ENCODE measurements at regions of chr17 and their contacts with region 1.

Region 1: GRCh38 chr17:69567130-69567529 is 152.6 kb downstream of the MAP2K6 start:
- DNase-seq: no peak
- H3K4me3 ChIP-seq: no peak overlapping the region
- H3K4me3 Mint-ChIP-seq: no peak overlapping the region
- H3K27ac ChIP-seq: no peak overlapping the region
- H3K27ac Mint-ChIP-seq: no peak overlapping the region
- H3K4me1 ChIP-seq: no peaks in the 10 kb centered on the region
- H3K4me1 Mint-ChIP-seq: peaks cover 0 to 6% (median 4%) of the 10 kb centered on the region in 4 donors
- H3K27me3 ChIP-seq: no peaks in the 10 kb centered on the region
- H3K27me3 Mint-ChIP-seq: peaks cover 2 to 17% of the 10 kb centered on the region in 2 donors

Region 2: GRCh38 chr17:69506489-69506888 is 60.6 kb before region 1 on chr17:
- CTCF ChIA-PET with region 1: no interaction called
- POLR2A ChIA-PET with region 1: no interaction called
- intact Hi-C with region 1: no loop called
- DNase-seq: no peak
- H3K4me3 ChIP-seq: no peak overlapping the region
- H3K4me3 Mint-ChIP-seq: no peak overlapping the region
- H3K27ac ChIP-seq: no peak overlapping the region
- H3K27ac Mint-ChIP-seq: peak overlapping the region in 2 of 7 donors; percentile 75 to 82
- H3K4me1 ChIP-seq: no peaks in the 10 kb centered on the region
- H3K4me1 Mint-ChIP-seq: peaks cover 6 to 21% (median 11%) of the 10 kb centered on the region in 4 donors
- H3K27me3 ChIP-seq: no peaks in the 10 kb centered on the region
- H3K27me3 Mint-ChIP-seq: no peaks in the 10 kb centered on the region

Region 3: DNA sequence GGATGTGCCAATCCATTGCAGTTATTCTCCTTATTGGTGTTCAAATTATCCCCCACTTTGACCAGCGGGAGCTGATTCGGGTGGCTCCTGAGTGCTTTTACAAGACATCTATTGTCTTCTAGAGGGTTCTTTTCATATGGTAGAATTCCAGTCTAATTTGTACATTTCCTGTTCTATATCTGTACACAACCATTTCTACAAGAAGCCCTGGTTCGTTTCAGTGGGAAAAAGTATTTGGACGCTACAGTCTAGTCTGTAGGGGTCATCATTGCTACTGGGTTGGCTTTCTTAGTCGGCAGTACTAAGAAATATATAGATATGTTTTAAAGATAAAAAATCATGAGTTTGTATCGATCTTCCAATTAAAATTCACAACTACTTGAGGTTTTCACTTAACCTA is 110.0 kb after region 1 on chr17:
- CTCF ChIA-PET with region 1: no interaction called
- POLR2A ChIA-PET with region 1: no interaction called
- intact Hi-C with region 1: no loop called
- DNase-seq: no peak
- H3K4me3 ChIP-seq: no peak overlapping the region
- H3K4me3 Mint-ChIP-seq: no peak overlapping the region
- H3K27ac ChIP-seq: no peak overlapping the region
- H3K27ac Mint-ChIP-seq: no peak overlapping the region
- H3K4me1 ChIP-seq: no peaks in the 10 kb centered on the region
- H3K4me1 Mint-ChIP-seq: no peaks in the 10 kb centered on the region
- H3K27me3 ChIP-seq: no peaks in the 10 kb centered on the region
- H3K27me3 Mint-ChIP-seq: no peaks in the 10 kb centered on the region

Region 4: GRCh38 chr17:70552230-70552981 is 985.3 kb after region 1 on chr17:
- CTCF ChIA-PET with region 1: interaction called, 5 read pairs
- POLR2A ChIA-PET with region 1: no interaction called
- intact Hi-C with region 1: loop called (anchors 5 kb)
- DNase-seq: no peak
- H3K4me3 ChIP-seq: no peak overlapping the region
- H3K4me3 Mint-ChIP-seq: no peak overlapping the region
- H3K27ac ChIP-seq: no peak overlapping the region
- H3K27ac Mint-ChIP-seq: no peak overlapping the region
- H3K4me1 ChIP-seq: no peaks in the 10 kb centered on the region
- H3K4me1 Mint-ChIP-seq: peaks cover 0 to 1% (median 0%) of the 10 kb centered on the region in 4 donors
- H3K27me3 ChIP-seq: no peaks in the 10 kb centered on the region
- H3K27me3 Mint-ChIP-seq: no peaks in the 10 kb centered on the region

Region 5: DNA sequence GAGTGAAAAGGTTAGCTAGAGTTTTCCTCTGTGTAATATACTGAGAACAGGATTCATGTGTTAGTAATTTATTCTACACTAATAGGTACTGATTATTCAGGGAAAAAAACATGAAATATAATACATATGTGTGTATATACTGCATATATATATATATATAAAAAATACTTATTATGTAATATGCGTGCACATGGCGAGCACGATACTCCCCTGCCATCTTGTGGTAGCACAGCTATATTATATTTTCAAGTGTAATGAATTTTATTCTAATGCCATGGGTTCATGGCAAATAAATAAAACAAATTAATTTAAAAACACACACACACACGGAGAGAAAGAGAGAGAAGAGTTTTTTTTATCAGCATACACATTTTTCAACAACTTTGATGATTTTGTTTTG is 1062.8 kb after region 1 on chr17:
- CTCF ChIA-PET with region 1: no interaction called
- POLR2A ChIA-PET with region 1: no interaction called
- intact Hi-C with region 1: loop called (anchors 5 kb)
- DNase-seq: no peak
- H3K4me3 ChIP-seq: no peak overlapping the region
- H3K4me3 Mint-ChIP-seq: no peak overlapping the region
- H3K27ac ChIP-seq: no peak overlapping the region
- H3K27ac Mint-ChIP-seq: no peak overlapping the region
- H3K4me1 ChIP-seq: no peaks in the 10 kb centered on the region
- H3K4me1 Mint-ChIP-seq: no peaks in the 10 kb centered on the region
- H3K27me3 ChIP-seq: no peaks in the 10 kb centered on the region
- H3K27me3 Mint-ChIP-seq: no peaks in the 10 kb centered on the region